Pancreas (tissue), 10 donors: ENCODE measurements at regions of chr20 and their contacts with region 1.

Region 1: DNA sequence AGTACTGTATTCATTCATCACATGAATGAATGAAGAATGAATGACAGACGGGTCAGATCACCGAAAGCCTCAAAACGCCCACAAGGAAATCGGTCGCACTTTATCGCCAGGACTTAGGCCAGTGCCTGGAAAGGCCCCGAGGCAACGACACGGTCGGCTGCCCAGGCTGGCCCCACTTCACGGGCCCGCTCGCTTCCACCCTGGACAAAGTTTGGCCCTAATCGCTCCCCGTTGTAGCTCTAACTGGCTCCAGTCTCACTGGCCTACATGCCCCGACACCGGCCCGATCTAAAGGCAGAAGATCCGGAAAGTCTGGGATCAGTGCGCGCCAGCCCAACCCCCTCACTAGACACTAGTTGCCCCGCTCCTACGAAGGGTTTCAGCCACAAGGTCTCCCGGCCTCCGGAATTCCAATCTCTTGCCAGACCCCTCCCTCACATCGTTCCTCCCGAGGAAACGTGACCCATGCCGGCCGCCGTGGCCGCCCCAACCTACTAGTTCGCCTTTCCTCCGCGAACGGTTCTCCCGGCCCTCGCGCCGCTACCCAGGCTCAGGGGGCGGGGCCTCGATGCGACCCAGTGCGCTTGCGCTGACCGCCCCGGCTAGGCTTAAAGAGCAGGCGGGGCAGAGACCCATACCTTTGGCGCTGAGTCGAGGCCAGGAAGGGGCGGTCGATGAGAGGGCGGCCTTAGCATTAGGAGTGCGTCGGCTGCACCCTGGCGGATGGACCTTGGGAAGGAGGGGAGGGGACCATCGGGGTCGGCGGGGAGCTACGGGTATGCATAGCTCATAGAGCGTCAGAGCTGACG is at the starts of genes GSS and MYH7B:
- DNase-seq: peak; percentile 97 to 100 (median 99)
- ATAC-seq: peak; percentile 96 to 99 (median 98)
- H3K4me3 ChIP-seq: peak within 1 kb of the TSS; percentile 44 to 75 (median 57)
- H3K27ac ChIP-seq: peak within 1 kb of the TSS; percentile 24 to 86 (median 73)
- H3K4me1 ChIP-seq: peaks cover 0 to 4% (median 0%) of the 10 kb centered on the region in 3 donors
- H3K27me3 ChIP-seq: no peaks in the 10 kb centered on the region
- CTCF ChIP-seq: no peak
- total RNA-seq, gene GSS: 6.7 to 17.9 (median 10.7) TPM
- total RNA-seq, gene MYH7B: 0.09 to 0.72 (median 0.27) TPM

Region 2: GRCh38 chr20:34876162-34877001 is 79.1 kb before region 1 on chr20 and contains the start of gene ACSS2:
- intact Hi-C with region 1: loop called in 2 of 3 experiments (anchors 2 to 10 kb)
- DNase-seq: peak; percentile 99 to 100 (median 100)
- ATAC-seq: peak; percentile 85 to 89 (median 86)
- H3K4me3 ChIP-seq: peak within 1 kb of the TSS; percentile 42 to 83 (median 70)
- H3K27ac ChIP-seq: peak within 1 kb of the TSS; percentile 50 to 82 (median 60)
- H3K4me1 ChIP-seq: peaks cover 0 to 17% (median 6%) of the 10 kb centered on the region in 3 donors
- H3K27me3 ChIP-seq: no peaks in the 10 kb centered on the region
- CTCF ChIP-seq: no peak
- total RNA-seq, gene ACSS2: 12.2 to 24.3 (median 19.4) TPM